A549 (cell line): ENCODE measurements at regions of chr20 and their contacts with region 1.

Region 1: GRCh38 chr20:13251106-13251903 is 30.2 kb downstream of the ISM1 start:
- DNase-seq: no peak
- ATAC-seq: no peak
- H3K4me3 ChIP-seq: no peak overlapping the region
- H3K27ac ChIP-seq: no peak overlapping the region
- H3K4me1 ChIP-seq: peaks cover 5% of the 10 kb centered on the region; the same call in 2 of the 3 replicates
- CTCF ChIP-seq: no peak
- EP300 ChIP-seq: no peak
- POLR2A ChIP-seq: no peak
- RAD21 ChIP-seq: no peak

Region 2: DNA sequence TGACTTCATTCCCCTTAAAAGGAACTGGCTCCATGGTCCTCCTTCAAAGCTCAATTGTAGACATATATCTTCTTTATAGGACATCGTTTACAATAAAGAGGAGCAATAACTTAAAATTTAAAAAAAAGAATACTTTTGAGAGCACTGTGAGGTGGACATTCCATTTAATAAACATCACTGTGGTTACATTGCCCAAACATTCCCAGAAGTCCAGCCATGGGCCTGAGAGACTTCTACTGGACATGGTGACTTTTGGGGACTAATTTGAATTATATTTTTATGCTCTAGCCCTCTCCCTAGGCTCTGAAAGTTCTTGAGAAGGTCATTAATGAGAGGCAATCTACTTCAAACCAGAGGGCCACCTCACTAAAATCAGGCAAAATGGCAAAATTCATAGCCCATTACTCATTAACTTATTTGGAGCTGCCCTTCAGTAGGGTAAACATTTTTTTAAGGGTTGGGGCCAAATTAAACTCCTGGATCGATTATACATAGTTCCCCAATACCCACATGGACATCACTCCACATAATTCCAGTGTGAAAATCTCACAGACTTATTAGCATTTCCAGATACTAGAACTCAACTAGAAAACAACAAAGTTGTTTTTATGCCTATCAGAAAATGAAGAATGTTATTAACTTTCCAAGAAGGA is 13.2 kb before region 1 on chr20:
- CTCF ChIA-PET with region 1: no interaction called
- POLR2A ChIA-PET with region 1: no interaction called
- DNase-seq: no peak
- ATAC-seq: no peak
- H3K4me3 ChIP-seq: no peak overlapping the region
- H3K27ac ChIP-seq: no peak overlapping the region
- H3K4me1 ChIP-seq: peaks cover 5% of the 10 kb centered on the region
- CTCF ChIP-seq: no peak
- EP300 ChIP-seq: no peak
- POLR2A ChIP-seq: no peak
- RAD21 ChIP-seq: no peak

Region 3: GRCh38 chr20:13261460-13262301 is 10.4 kb after region 1 on chr20:
- CTCF ChIA-PET with region 1: interaction called, 29 read pairs
- POLR2A ChIA-PET with region 1: no interaction called
- DNase-seq: peak; percentile 62 to 75
- ATAC-seq: peak; percentile 94 to 99
- H3K4me3 ChIP-seq: no peak overlapping the region
- H3K27ac ChIP-seq: no peak overlapping the region
- H3K4me1 ChIP-seq: peaks cover 14% of the 10 kb centered on the region; the same call in 2 of the 3 replicates
- CTCF ChIP-seq: peak; percentile 74
- EP300 ChIP-seq: no peak
- POLR2A ChIP-seq: no peak
- RAD21 ChIP-seq: peak; percentile 69 to 72